AG04450 (cell line): ENCODE measurements at regions of chr12 and their contacts with region 1.

Region 1: DNA sequence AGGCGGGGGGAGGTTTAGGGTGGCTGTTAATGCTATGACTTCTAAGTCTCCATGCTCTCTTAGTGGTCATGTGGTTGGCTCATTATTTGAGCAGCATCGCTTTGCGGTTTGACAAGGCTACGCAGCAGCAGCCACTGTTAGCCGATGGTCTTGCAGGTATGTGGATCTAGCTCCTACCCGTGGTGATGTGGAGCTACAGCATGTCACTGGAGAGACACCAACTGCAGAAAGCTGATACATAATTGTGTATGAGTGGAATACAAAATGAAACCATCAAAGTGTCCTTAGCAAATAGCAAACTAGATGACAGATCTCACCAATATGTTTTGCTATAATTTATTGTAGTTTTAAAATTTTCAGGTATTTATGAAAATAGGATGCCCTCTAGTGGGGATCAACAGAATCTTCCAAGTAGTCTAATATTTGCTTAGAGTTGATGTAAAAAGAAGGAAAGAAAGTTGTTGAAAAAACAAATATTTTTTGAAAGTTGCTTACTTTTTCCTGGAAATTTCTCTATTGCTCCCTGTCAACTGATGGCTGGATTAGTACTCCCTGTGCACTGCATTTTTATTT is 94.9 kb downstream of the NAV3 start:
- DNase-seq: peak; percentile 84
- H3K4me3 ChIP-seq: no peak overlapping the region; the same call in 1 of the 2 replicates
- H3K27ac ChIP-seq: no peak overlapping the region
- H3K27me3 ChIP-seq: no peaks in the 10 kb centered on the region
- CTCF ChIP-seq: peak; percentile 100

Region 2: DNA sequence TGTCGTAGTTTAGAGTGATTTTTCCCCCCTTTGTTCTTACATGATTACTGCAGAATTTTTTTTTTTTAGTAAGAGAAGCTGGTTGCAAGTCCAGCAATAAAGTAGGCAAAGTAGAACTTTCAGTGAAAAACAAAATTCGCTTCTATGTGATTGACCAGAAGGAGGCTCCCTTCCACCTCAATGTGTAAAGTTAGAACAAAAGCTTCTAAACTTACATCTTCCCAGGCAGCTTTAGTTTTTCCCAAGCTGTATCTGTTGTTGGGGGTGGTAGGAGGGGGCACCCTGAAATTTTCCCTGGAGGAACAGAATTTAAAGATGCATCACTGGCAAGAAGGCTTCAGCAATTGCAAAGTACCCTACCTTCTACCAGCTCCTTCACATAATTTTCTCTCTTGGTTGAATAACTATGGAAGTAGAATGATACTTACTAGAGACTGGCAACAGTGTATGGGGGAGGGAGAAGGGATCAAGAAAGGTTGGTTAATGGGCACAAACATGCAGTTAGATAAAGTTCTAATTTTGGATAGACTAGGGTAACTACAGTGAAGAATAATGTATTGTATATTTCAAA is 772.9 kb before region 1 on chr12:
- CTCF ChIA-PET with region 1: interaction called, 14 read pairs
- POLR2A ChIA-PET with region 1: no interaction called
- DNase-seq: peak; percentile 20
- H3K4me3 ChIP-seq: no peak overlapping the region
- H3K27ac ChIP-seq: no peak overlapping the region
- H3K27me3 ChIP-seq: no peaks in the 10 kb centered on the region
- CTCF ChIP-seq: peak; percentile 76

Region 3: DNA sequence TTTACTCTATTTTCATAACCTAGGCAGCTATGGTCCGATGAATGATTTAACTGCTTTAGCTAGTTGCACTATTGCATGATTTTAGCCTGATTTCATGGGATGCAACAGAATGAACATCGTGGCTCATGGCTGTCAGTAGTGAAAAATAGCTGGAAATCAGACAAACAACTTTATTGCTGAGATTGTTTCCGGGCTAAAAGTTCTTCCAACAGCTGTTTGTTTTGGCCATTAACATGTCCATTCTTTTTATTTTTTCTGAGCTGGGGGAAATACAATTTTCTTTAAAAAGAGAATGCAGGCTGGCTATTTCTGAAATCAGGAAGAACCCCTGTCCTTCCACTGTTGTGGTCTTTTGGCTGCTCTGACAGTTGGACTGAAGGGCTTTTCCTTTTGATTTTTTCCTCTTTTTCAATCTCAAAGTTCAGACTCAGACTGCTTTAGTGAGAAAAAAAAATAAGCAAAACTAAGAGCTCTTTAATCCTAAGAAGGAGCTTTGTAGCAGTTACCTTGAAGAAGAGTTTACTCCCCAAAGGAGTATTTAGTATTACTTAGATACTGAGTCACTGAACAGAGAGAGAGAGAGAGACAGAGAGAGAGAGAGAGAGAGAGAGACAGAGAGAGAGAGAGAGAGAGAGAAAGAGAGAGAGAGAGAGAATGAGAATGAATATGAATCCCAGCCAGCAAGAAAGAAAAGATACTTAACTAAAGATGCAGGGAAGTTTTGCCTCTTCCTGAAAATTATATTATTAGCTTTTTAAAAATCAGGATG is 94.9 kb before region 1 on chr12 and contains the start of gene NAV3:
- CTCF ChIA-PET with region 1: interaction called, 11 read pairs
- POLR2A ChIA-PET with region 1: no interaction called
- DNase-seq: no peak
- H3K4me3 ChIP-seq: no peak within 1 kb of the TSS
- H3K27ac ChIP-seq: no peak within 1 kb of the TSS
- H3K27me3 ChIP-seq: no peaks in the 10 kb centered on the region
- CTCF ChIP-seq: no peak
- polyA plus RNA-seq, gene NAV3: 29.8 and 36.1 TPM in 2 replicates

Region 4: DNA sequence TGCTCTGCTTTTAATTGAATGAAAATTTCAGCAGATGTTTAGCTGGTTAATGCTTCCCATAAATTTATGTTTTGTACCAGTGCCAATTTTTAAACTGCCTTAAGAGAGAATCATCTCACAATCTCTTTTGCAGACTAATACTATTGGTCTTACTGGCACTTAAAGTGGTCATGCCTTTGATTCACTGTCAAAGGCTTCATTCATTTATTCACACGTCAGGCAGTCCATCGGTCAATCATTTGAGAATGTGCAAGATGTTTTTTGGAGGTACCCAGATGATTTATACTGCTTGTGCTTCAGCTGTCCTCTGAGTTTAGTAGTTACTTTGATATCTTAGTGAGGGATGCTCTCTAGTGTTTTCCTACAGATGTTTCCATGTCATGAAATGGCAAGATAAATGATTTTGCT is 11.5 kb before region 1 on chr12:
- CTCF ChIA-PET with region 1: interaction called, 47 read pairs
- POLR2A ChIA-PET with region 1: no interaction called
- DNase-seq: no peak
- H3K4me3 ChIP-seq: no peak overlapping the region
- H3K27ac ChIP-seq: no peak overlapping the region
- H3K27me3 ChIP-seq: no peaks in the 10 kb centered on the region
- CTCF ChIP-seq: no peak

Region 5: GRCh38 chr12:77947326-77947725 is 21.7 kb after region 1 on chr12:
- CTCF ChIA-PET with region 1: interaction called, 11 read pairs
- POLR2A ChIA-PET with region 1: no interaction called
- DNase-seq: no peak
- H3K4me3 ChIP-seq: peak overlapping the region; percentile 28
- H3K27ac ChIP-seq: no peak overlapping the region
- H3K27me3 ChIP-seq: no peaks in the 10 kb centered on the region
- CTCF ChIP-seq: no peak

Region 6: GRCh38 chr12:77965790-77966189 is 40.2 kb after region 1 on chr12:
- CTCF ChIA-PET with region 1: no interaction called
- POLR2A ChIA-PET with region 1: no interaction called
- DNase-seq: no peak
- H3K4me3 ChIP-seq: no peak overlapping the region
- H3K27ac ChIP-seq: no peak overlapping the region
- H3K27me3 ChIP-seq: no peaks in the 10 kb centered on the region
- CTCF ChIP-seq: no peak

Region 7: DNA sequence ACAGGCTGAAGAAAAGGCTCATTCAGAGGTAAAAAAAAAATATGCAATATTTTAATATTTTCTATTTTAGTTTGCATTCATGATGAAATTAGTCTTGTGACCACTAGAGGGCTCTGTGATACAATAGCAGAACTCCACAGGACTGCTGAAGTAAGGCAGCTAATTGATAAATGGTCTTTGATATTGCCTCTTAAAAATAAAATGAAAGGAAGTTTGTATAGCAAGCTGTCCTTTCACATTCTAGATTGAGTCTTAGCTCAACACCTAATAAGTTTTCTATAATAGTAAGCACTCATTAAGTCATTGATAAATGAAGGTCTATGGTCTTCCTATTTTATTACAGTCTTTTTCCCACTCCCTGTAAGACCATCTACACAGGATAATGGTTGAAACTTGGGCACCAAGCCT is 220.7 kb after region 1 on chr12:
- CTCF ChIA-PET with region 1: no interaction called
- POLR2A ChIA-PET with region 1: no interaction called
- DNase-seq: peak; percentile 11
- H3K4me3 ChIP-seq: no peak overlapping the region
- H3K27ac ChIP-seq: no peak overlapping the region
- H3K27me3 ChIP-seq: no peaks in the 10 kb centered on the region
- CTCF ChIP-seq: peak; percentile 80